CD8-positive, alpha-beta T cell (primary cell): ENCODE measurements at regions of chr1 and their contacts with region 1.

Region 1: DNA sequence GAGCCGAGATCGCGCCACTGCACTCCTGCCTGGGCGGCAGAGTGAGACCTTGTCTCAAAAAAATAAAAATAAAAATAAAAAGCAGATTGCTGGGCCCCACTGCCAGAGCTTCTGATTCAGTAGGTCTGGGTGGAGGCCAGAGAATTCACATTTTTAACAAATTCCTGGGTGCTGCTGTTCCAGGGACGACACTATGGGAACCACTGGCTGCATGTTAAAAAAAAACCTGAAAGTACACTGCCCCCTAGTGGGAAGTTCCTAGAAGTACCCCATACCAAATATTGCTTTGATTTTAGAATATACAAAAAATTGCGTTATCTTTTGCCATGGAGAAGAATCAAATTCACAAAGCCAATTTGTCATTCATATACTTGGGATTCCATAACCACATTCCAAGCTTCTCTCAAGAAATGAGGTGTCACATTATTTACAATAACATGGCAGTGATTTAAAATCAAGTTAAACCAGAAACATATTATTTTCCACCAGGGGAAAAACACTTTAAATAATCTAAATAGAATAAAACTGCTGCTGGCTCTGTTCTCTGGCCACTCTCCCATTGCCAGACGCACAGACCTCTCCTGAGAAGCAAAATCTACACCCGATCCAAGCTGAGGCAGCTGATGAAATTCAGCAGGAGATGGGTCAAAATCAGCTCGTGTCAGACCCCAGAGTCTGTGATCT is 27.4 kb downstream of the SYF2 start:
- DNase-seq: peak in 5 of 9 experiments; percentile 13 to 73 (median 50)
- ATAC-seq: peak; percentile 70
- H3K4me3 ChIP-seq: no peak overlapping the region
- H3K4me3 Mint-ChIP-seq: no peak overlapping the region
- H3K27ac ChIP-seq: no peak overlapping the region
- H3K27ac Mint-ChIP-seq: no peak overlapping the region
- H3K4me1 ChIP-seq: no peaks in the 10 kb centered on the region
- H3K4me1 Mint-ChIP-seq: peaks cover 2% of the 10 kb centered on the region
- H3K27me3 ChIP-seq: no peaks in the 10 kb centered on the region
- H3K27me3 Mint-ChIP-seq: peaks cover 10% of the 10 kb centered on the region
- CTCF ChIP-seq: peak; percentile 85

Region 2: GRCh38 chr1:25148673-25149300 is 56.2 kb before region 1 on chr1:
- CTCF ChIA-PET with region 1: interaction called, 4 read pairs
- POLR2A ChIA-PET with region 1: no interaction called
- intact Hi-C with region 1: loop called in 1 of 2 experiments (anchors 2 kb)
- DNase-seq: peak in 5 of 9 experiments; percentile 29 to 78 (median 34)
- ATAC-seq: peak; percentile 73
- H3K4me3 ChIP-seq: no peak overlapping the region
- H3K4me3 Mint-ChIP-seq: no peak overlapping the region
- H3K27ac ChIP-seq: no peak overlapping the region
- H3K27ac Mint-ChIP-seq: no peak overlapping the region
- H3K4me1 ChIP-seq: no peaks in the 10 kb centered on the region
- H3K4me1 Mint-ChIP-seq: peaks cover 4% of the 10 kb centered on the region
- H3K27me3 ChIP-seq: no peaks in the 10 kb centered on the region
- H3K27me3 Mint-ChIP-seq: peaks cover 13% of the 10 kb centered on the region
- CTCF ChIP-seq: peak; percentile 69

Region 3: GRCh38 chr1:25190260-25190659 is 14.7 kb before region 1 on chr1:
- CTCF ChIA-PET with region 1: interaction called, 18 read pairs
- POLR2A ChIA-PET with region 1: no interaction called
- intact Hi-C with region 1: no loop called
- DNase-seq: no peak
- ATAC-seq: no peak
- H3K4me3 ChIP-seq: no peak overlapping the region
- H3K4me3 Mint-ChIP-seq: no peak overlapping the region
- H3K27ac ChIP-seq: no peak overlapping the region
- H3K27ac Mint-ChIP-seq: no peak overlapping the region
- H3K4me1 ChIP-seq: no peaks in the 10 kb centered on the region
- H3K4me1 Mint-ChIP-seq: no peaks in the 10 kb centered on the region
- H3K27me3 ChIP-seq: no peaks in the 10 kb centered on the region
- H3K27me3 Mint-ChIP-seq: peaks cover 7% of the 10 kb centered on the region
- CTCF ChIP-seq: no peak

Region 4: GRCh38 chr1:25216123-25216522 is 11.2 kb after region 1 on chr1:
- CTCF ChIA-PET with region 1: interaction called, 15 read pairs
- POLR2A ChIA-PET with region 1: no interaction called
- intact Hi-C with region 1: no loop called
- DNase-seq: no peak
- ATAC-seq: no peak
- H3K4me3 ChIP-seq: no peak overlapping the region
- H3K4me3 Mint-ChIP-seq: no peak overlapping the region
- H3K27ac ChIP-seq: no peak overlapping the region
- H3K27ac Mint-ChIP-seq: no peak overlapping the region
- H3K4me1 ChIP-seq: no peaks in the 10 kb centered on the region
- H3K4me1 Mint-ChIP-seq: no peaks in the 10 kb centered on the region
- H3K27me3 ChIP-seq: no peaks in the 10 kb centered on the region
- H3K27me3 Mint-ChIP-seq: no peaks in the 10 kb centered on the region
- CTCF ChIP-seq: no peak

Region 5: GRCh38 chr1:25239681-25240541 is 35.0 kb after region 1 on chr1:
- CTCF ChIA-PET with region 1: no interaction called
- POLR2A ChIA-PET with region 1: no interaction called
- intact Hi-C with region 1: no loop called
- DNase-seq: peak; percentile 64 to 94 (median 82)
- ATAC-seq: peak; percentile 84
- H3K4me3 ChIP-seq: peak overlapping the region; percentile 37 to 60
- H3K4me3 Mint-ChIP-seq: peak overlapping the region; percentile 92
- H3K27ac ChIP-seq: peak overlapping the region; percentile 64 to 88
- H3K27ac Mint-ChIP-seq: peak overlapping the region; percentile 97
- H3K4me1 ChIP-seq: peaks cover 47% of the 10 kb centered on the region
- H3K4me1 Mint-ChIP-seq: peaks cover 61% of the 10 kb centered on the region
- H3K27me3 ChIP-seq: no peaks in the 10 kb centered on the region
- H3K27me3 Mint-ChIP-seq: no peaks in the 10 kb centered on the region
- CTCF ChIP-seq: peak; percentile 61